Body of pancreas (tissue), 4 donors: ENCODE measurements at regions of chr15 and their contacts with region 1.

Region 1: GRCh38 chr15:63640146-63640545 is 43.0 kb downstream of the FBXL22 start:
- DNase-seq: no peak
- ATAC-seq: no peak
- H3K4me3 ChIP-seq: no peak overlapping the region
- H3K27ac ChIP-seq: no peak overlapping the region
- H3K4me1 ChIP-seq: no peaks in the 10 kb centered on the region
- H3K27me3 ChIP-seq: no peaks in the 10 kb centered on the region
- CTCF ChIP-seq: no peak
- POLR2A ChIP-seq: no peak

Region 2: DNA sequence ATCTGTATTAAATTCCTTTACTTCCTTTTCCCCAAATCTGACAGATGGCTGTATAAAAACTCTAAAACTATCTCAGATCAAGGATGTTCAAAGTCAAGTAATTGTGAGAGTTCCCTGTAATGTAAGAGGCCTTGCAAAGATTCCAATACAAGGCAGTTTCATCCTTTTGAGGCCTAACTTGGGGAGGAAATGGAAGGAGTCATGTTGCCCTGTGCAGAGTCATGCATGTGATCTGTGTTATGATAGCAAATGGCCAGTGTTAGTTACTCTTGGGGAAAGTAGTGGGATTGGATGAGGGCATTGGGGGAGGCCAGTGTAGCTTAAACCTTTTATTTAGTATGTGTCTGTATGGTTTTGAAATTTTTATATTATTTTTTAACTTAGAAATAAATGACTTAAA is 66.6 kb before region 1 on chr15:
- intact Hi-C with region 1: no loop called
- DNase-seq: no peak
- ATAC-seq: no peak
- H3K4me3 ChIP-seq: no peak overlapping the region
- H3K27ac ChIP-seq: no peak overlapping the region
- H3K4me1 ChIP-seq: peaks cover 7% of the 10 kb centered on the region
- H3K27me3 ChIP-seq: no peaks in the 10 kb centered on the region
- CTCF ChIP-seq: no peak
- POLR2A ChIP-seq: no peak

Region 3: DNA sequence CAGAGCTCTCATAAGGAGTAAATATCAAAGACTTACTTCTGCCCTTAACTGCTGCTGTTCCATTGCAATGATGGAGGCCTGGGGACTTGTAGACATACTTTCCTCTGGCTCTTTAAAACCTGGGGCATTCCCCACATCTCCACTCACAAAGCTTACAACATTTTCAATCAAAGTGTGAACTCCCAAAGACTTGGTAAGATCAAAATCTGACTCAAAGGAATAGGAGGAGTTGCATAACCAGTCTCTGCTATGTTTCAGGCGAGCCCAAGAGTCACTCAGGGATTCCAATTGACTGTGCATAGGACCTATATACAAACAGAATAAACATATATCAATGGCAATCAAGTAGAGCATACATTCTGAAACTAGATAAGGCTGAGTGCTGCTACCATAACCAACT is 58.5 kb after region 1 on chr15:
- intact Hi-C with region 1: loop called (anchors 10 kb)
- DNase-seq: no peak
- ATAC-seq: no peak
- H3K4me3 ChIP-seq: no peak overlapping the region
- H3K27ac ChIP-seq: no peak overlapping the region
- H3K4me1 ChIP-seq: no peaks in the 10 kb centered on the region
- H3K27me3 ChIP-seq: no peaks in the 10 kb centered on the region
- CTCF ChIP-seq: no peak
- POLR2A ChIP-seq: no peak